Activated CD8-positive, alpha-beta T cell treated with anti-CD3 and anti-CD28 coated beads for 36 hours (primary cell): ENCODE measurements at regions of chr3 and their contacts with region 1.

Region 1: GRCh38 chr3:123642182-123642956 is 57.5 kb upstream of the HACD2 start:
- DNase-seq: peak; percentile 88
- ATAC-seq: peak; percentile 97
- H3K4me3 Mint-ChIP-seq: no peak overlapping the region
- H3K27ac Mint-ChIP-seq: no peak overlapping the region
- H3K4me1 Mint-ChIP-seq: no peaks in the 10 kb centered on the region
- H3K27me3 Mint-ChIP-seq: no peaks in the 10 kb centered on the region
- CTCF ChIP-seq: peak; percentile 79

Region 2: DNA sequence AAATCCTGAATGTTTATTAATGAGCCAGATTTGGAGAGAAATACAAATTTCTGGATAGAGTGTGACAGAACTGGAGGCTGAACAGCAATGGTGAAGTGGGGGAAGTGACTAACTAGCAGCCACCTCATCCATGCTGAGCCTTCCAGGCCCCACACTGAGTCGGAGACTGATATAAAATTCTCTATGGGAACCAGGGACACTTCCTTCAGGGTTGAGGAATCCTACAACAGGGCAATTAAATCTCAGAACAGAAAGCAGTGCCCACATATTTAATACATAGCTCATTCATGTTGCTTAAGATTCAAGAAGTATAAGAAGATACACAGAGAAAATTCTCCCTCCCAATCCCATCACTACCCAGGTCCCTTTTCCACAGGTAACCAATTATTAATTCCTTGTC is 106.8 kb before region 1 on chr3:
- CTCF ChIA-PET with region 1: no interaction called
- POLR2A ChIA-PET with region 1: no interaction called
- intact Hi-C with region 1: no loop called
- DNase-seq: no peak
- ATAC-seq: no peak
- H3K4me3 Mint-ChIP-seq: no peak overlapping the region
- H3K27ac Mint-ChIP-seq: no peak overlapping the region
- H3K4me1 Mint-ChIP-seq: peaks cover 18% of the 10 kb centered on the region
- H3K27me3 Mint-ChIP-seq: no peaks in the 10 kb centered on the region
- CTCF ChIP-seq: no peak

Region 3: DNA sequence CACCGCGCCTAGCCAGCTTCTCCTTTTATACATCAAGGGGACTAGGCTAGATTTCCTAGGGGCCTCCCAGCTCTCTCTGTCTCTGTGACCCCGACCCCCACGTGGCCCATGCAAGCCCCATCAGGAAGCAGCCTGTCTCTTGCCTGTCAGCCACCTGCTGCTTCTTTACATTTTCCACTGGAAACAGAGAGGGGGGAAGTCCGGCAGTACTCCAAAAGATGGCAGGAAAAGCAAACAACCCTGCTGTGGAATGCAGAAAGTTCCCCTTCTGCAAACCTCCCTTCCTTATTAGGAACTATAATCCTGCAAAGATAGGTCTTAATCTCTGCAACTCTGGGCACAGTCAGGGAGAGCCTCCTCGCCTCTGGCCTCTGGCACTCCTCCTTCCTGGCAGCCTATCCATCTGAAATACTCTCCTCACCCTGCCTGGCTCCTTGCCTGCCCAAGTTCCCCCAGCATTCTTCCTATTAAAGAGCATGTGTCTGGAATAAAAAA is 10.2 kb before region 1 on chr3:
- CTCF ChIA-PET with region 1: interaction called, 10 read pairs
- POLR2A ChIA-PET with region 1: no interaction called
- intact Hi-C with region 1: no loop called
- DNase-seq: no peak
- ATAC-seq: no peak
- H3K4me3 Mint-ChIP-seq: no peak overlapping the region
- H3K27ac Mint-ChIP-seq: no peak overlapping the region
- H3K4me1 Mint-ChIP-seq: no peaks in the 10 kb centered on the region
- H3K27me3 Mint-ChIP-seq: no peaks in the 10 kb centered on the region
- CTCF ChIP-seq: no peak

Region 4: GRCh38 chr3:123652346-123652984 is 10.1 kb after region 1 on chr3:
- CTCF ChIA-PET with region 1: interaction called, 58 read pairs
- POLR2A ChIA-PET with region 1: no interaction called
- intact Hi-C with region 1: no loop called
- DNase-seq: peak; percentile 64
- ATAC-seq: peak; percentile 66
- H3K4me3 Mint-ChIP-seq: no peak overlapping the region
- H3K27ac Mint-ChIP-seq: no peak overlapping the region
- H3K4me1 Mint-ChIP-seq: no peaks in the 10 kb centered on the region
- H3K27me3 Mint-ChIP-seq: no peaks in the 10 kb centered on the region
- CTCF ChIP-seq: peak; percentile 69

Region 5: DNA sequence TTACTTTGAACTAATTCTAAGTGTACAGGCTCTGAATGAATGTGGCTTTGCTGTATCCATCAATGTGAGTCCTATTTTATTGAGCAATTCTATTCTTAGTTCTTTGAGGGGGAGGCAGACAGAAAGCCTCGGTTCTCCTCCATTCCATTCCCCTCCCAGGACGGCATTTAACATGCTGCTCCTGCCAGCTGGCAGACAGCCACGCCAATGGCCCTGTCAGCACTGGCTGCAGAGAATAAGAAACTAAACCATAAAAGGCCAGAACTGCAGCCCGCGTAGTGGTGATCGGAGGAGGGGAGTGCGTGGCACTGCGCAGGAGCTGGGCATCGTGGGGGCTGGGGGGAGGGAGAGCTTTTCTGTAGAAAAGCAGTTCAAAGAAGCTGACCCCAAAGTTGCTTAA is 18.5 kb after region 1 on chr3:
- CTCF ChIA-PET with region 1: interaction called, 58 read pairs
- POLR2A ChIA-PET with region 1: no interaction called
- intact Hi-C with region 1: no loop called
- DNase-seq: no peak
- ATAC-seq: no peak
- H3K4me3 Mint-ChIP-seq: no peak overlapping the region
- H3K27ac Mint-ChIP-seq: no peak overlapping the region
- H3K4me1 Mint-ChIP-seq: no peaks in the 10 kb centered on the region
- H3K27me3 Mint-ChIP-seq: peaks cover 6% of the 10 kb centered on the region
- CTCF ChIP-seq: no peak

Region 6: GRCh38 chr3:124032648-124033359 is 390.4 kb after region 1 on chr3:
- CTCF ChIA-PET with region 1: no interaction called
- POLR2A ChIA-PET with region 1: no interaction called
- intact Hi-C with region 1: no loop called
- DNase-seq: peak; percentile 70
- ATAC-seq: peak; percentile 88
- H3K4me3 Mint-ChIP-seq: peak overlapping the region; percentile 58
- H3K27ac Mint-ChIP-seq: no peak overlapping the region
- H3K4me1 Mint-ChIP-seq: peaks cover 10% of the 10 kb centered on the region
- H3K27me3 Mint-ChIP-seq: peaks cover 43% of the 10 kb centered on the region
- CTCF ChIP-seq: peak; percentile 86